ENCODE measurements at regions of chr12 and their contacts with region 1.

Region 1: GRCh38 chr12:94762259-94762942 is 112.0 kb upstream of the TMCC3 start:
- DNase-seq: no peak
- H3K4me3 ChIP-seq: no peak overlapping the region
- H3K27ac ChIP-seq: peak overlapping the region; percentile 89
- H3K4me1 ChIP-seq: peaks cover 9% of the 10 kb centered on the region
- H3K27me3 ChIP-seq: no peaks in the 10 kb centered on the region
- CTCF ChIP-seq: no peak
- POLR2A ChIP-seq: no peak

Region 2: DNA sequence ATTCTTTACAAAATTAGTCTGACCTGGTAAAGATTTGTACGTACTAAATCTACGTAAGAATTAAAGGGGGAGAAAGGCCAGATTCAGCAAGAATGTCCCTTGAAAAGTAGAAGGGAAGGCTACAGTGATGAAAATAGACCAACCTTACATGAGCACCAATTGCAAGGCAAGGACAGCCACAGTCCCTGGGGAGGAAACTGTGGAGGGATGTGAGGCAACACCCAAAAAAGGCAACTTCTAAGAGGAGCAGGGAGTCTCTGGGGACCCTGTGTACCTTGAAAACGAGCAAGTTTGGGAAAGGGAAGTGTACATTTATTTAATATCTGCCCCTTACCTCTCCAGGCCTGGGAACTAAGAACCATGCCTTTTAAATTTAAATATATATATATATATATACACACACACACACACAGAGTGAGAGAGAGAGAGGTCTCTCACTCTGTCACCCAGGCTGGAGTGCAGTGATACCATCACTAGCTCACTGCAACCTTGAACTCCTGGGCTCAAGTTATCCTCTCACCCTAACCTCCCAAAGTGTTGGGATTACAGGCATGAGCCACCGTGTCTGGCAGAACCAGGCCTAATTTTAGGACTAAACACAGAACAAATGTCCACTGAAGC is 168.5 kb before region 1 on chr12:
- CTCF ChIA-PET with region 1: no interaction called
- POLR2A ChIA-PET with region 1: no interaction called
- dilution Hi-C with region 1: no loop called
- intact Hi-C with region 1: loop called (anchors 5 kb)
- DNase-seq: no peak
- H3K4me3 ChIP-seq: no peak overlapping the region
- H3K27ac ChIP-seq: peak overlapping the region; percentile 0
- H3K4me1 ChIP-seq: peaks cover 57% of the 10 kb centered on the region
- H3K27me3 ChIP-seq: no peaks in the 10 kb centered on the region
- CTCF ChIP-seq: no peak
- POLR2A ChIP-seq: no peak

Region 3: GRCh38 chr12:94875525-94875924 is 113.1 kb after region 1 on chr12:
- CTCF ChIA-PET with region 1: no interaction called
- POLR2A ChIA-PET with region 1: no interaction called
- dilution Hi-C with region 1: no loop called
- intact Hi-C with region 1: loop called (anchors 5 kb)
- DNase-seq: peak; percentile 41
- H3K4me3 ChIP-seq: no peak overlapping the region
- H3K27ac ChIP-seq: no peak overlapping the region
- H3K4me1 ChIP-seq: no peaks in the 10 kb centered on the region
- H3K27me3 ChIP-seq: peaks cover 44 to 52% of the 10 kb centered on the region in 2 experiments
- CTCF ChIP-seq: peak in 1 of 2 donors; percentile 27
- POLR2A ChIP-seq: no peak

Region 4: GRCh38 chr12:95072900-95073697 is 310.7 kb after region 1 on chr12 and contains the start of gene NR2C1:
- CTCF ChIA-PET with region 1: no interaction called
- POLR2A ChIA-PET with region 1: no interaction called
- dilution Hi-C with region 1: no loop called
- intact Hi-C with region 1: loop called (anchors 5 kb)
- DNase-seq: peak; percentile 91
- H3K4me3 ChIP-seq: peak within 1 kb of the TSS; percentile 72 to 88 (median 87)
- H3K27ac ChIP-seq: peak within 1 kb of the TSS; percentile 79
- H3K4me1 ChIP-seq: peaks cover 4% of the 10 kb centered on the region
- H3K27me3 ChIP-seq: no peaks in the 10 kb centered on the region
- CTCF ChIP-seq: no peak
- POLR2A ChIP-seq: peak; percentile 47
- total RNA-seq, gene NR2C1: 36.3 and 37.7 TPM in 2 replicates

Region 5: GRCh38 chr12:95774311-95775045 is 1012.1 kb after region 1 on chr12:
- CTCF ChIA-PET with region 1: no interaction called
- POLR2A ChIA-PET with region 1: no interaction called
- dilution Hi-C with region 1: no loop called
- intact Hi-C with region 1: no loop called
- DNase-seq: no peak
- H3K4me3 ChIP-seq: no peak overlapping the region
- H3K27ac ChIP-seq: no peak overlapping the region
- H3K4me1 ChIP-seq: no peaks in the 10 kb centered on the region
- H3K27me3 ChIP-seq: no peaks in the 10 kb centered on the region
- CTCF ChIP-seq: no peak
- POLR2A ChIP-seq: no peak

Measured in endothelial cell of umbilical vein (primary cell).